ENCODE measurements at regions of chr5 and their contacts with region 1.

Region 1: GRCh38 chr5:849651-850301 is 1.0 kb downstream of the ZDHHC11 start:
- DNase-seq: peak in 1 of 2 donors; percentile 71
- H3K4me3 ChIP-seq: peak overlapping the region in 2 of 3 donors; percentile 43 to 62
- H3K27ac ChIP-seq: no peak overlapping the region
- H3K4me1 ChIP-seq: no peaks in the 10 kb centered on the region
- H3K27me3 ChIP-seq: peaks cover 0 to 18% of the 10 kb centered on the region in 2 donors
- CTCF ChIP-seq: no peak
- POLR2A ChIP-seq: no peak

Region 2: DNA sequence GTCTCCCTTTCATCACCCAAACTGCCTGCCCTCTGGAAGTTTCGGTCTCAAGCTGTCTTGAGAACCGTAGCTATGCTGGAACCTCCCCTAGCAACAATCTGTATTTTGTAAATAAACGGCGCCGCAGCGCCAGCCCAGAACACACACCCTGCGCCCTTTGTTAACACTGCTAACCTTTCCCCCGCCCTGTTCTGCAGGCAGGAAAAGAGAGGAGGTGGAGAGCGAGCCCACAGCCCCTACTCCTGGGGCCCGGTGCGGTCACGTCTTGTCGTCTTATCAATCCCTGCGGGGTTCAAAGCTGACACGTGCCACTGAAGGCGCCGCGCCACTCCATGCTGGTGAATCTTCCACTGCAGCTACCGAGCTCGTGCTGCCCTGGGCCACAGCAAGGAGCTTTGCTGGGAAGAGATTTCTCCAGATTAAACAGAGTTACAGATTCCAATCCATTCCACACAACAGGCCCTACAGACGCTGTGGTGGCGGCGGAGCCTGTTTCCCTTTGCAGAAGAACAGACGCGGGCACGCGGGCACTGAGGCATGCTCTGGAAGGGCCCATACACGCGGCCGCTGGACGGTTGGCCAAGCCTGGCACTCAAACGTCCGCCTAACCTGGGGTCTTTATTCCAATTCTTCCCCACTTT is 90.5 kb before region 1 on chr5:
- intact Hi-C with region 1: loop called (anchors 5 kb)
- DNase-seq: peak; percentile 57 to 85
- H3K4me3 ChIP-seq: peak overlapping the region in 2 of 3 donors; percentile 16 to 43
- H3K27ac ChIP-seq: peak overlapping the region; percentile 13 to 23
- H3K4me1 ChIP-seq: peaks cover 0 to 6% of the 10 kb centered on the region in 2 donors
- H3K27me3 ChIP-seq: no peaks in the 10 kb centered on the region
- CTCF ChIP-seq: no peak
- POLR2A ChIP-seq: no peak

Region 3: GRCh38 chr5:1161833-1162229 is 312.1 kb after region 1 on chr5:
- intact Hi-C with region 1: no loop called
- DNase-seq: peak; percentile 88 to 89
- H3K4me3 ChIP-seq: peak overlapping the region in 2 of 3 donors; percentile 24 to 54
- H3K27ac ChIP-seq: peak overlapping the region; percentile 85 to 93
- H3K4me1 ChIP-seq: peaks cover 0 to 10% of the 10 kb centered on the region in 2 donors
- H3K27me3 ChIP-seq: peaks cover 0 to under 1% of the 10 kb centered on the region in 2 donors
- CTCF ChIP-seq: no peak
- POLR2A ChIP-seq: no peak

Region 4: DNA sequence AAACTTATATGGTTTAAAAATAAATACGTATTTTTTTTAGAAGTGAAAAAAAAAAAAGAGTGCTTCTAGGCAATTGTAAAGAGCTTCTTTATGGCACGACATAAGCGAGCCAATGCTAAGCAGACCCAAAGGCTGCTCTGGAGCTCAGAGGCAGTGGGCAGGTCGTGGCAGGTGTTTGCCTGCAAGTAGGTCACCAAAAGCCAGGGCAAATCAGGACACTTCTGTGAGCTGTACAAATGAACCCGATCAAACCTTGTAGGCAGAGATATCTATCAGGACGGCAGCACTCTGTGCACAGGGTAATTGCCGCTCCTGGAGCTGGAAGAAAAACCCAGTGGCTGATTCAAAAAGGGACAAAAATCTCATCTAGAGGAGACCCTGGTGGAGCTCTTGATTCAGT is 1825.8 kb after region 1 on chr5:
- intact Hi-C with region 1: no loop called
- DNase-seq: no peak
- H3K4me3 ChIP-seq: no peak overlapping the region
- H3K27ac ChIP-seq: no peak overlapping the region
- H3K4me1 ChIP-seq: no peaks in the 10 kb centered on the region
- H3K27me3 ChIP-seq: no peaks in the 10 kb centered on the region
- CTCF ChIP-seq: no peak
- POLR2A ChIP-seq: no peak

Measured in breast epithelium (tissue), 4 donors.